ENCODE measurements at regions of chr11 and their contacts with region 1.

Region 1: DNA sequence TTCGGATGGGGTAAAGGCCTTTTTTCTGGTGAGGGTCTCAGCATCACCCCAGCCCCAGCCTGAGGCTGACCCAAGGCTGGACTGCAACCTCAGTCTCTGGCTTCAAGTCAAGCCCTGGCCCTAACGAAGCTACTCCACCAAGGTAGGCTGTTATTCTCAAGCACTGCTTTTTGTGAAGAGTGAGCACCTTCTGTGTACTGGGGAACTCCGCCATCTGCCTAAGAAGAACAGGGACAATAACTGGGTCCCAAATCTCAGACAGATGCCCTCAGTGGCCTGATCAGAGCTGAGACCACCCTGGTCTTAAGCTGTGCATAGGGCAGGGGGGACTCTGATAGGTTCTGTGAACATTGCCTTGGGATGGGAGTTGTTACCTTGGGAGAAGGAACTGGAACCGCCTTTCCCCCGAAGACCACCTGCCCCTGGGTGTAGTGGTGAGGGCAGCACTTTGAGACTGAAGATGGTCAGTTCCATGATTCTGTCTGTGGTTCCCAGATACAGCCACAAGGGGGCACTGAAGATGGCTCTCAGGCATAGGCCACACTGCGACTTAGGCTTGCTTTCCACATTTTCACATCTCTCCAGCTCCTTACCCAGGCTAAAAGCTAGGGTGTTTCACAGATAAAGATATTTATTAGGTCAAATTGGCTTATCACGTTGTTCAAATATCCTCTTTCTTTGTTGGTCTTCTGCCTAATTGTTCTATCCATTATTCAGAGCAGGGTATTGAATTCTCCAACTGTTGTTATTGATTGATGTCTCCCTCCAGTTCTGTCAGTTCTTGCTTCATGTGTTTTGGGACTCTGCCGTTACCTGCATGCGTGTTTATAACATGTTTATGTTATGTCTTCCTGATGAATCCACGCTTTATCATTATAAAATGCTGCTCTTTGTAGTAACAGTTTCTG is 11.8 kb upstream of the UVRAG start:
- DNase-seq: peak; percentile 81
- ATAC-seq: peak; percentile 93
- H3K4me3 Mint-ChIP-seq: no peak overlapping the region
- H3K27ac Mint-ChIP-seq: no peak overlapping the region
- H3K4me1 Mint-ChIP-seq: peaks cover 20% of the 10 kb centered on the region
- H3K27me3 Mint-ChIP-seq: peaks cover 4% of the 10 kb centered on the region

Region 2: DNA sequence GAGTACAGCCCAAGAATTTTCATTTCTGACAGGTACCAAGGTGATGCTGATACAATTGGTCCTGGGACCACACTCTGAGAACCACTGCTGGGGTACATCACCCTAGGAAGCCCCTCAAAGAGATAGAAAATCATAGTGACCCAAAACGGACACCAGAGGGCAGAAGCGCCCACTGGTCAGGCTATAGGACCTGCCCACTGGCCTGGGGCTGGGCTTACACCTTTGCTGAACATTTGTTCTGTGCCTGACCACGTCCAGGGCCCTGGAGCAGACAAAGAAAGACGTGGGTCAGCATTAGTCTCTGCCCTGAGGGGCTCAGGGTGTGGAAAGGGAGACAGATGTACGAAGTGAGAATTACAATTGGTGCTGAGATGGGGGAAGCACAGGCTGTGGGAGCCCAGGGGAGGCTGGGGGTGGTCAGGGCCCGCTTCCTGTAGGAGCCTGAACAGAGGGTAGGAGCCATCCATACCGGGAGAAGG is 255.5 kb before region 1 on chr11:
- CTCF ChIA-PET with region 1: no interaction called
- POLR2A ChIA-PET with region 1: no interaction called
- DNase-seq: peak; percentile 52
- ATAC-seq: peak; percentile 76
- H3K4me3 Mint-ChIP-seq: no peak overlapping the region
- H3K27ac Mint-ChIP-seq: no peak overlapping the region
- H3K4me1 Mint-ChIP-seq: peaks cover 5% of the 10 kb centered on the region
- H3K27me3 Mint-ChIP-seq: peaks cover 9% of the 10 kb centered on the region

Region 3: DNA sequence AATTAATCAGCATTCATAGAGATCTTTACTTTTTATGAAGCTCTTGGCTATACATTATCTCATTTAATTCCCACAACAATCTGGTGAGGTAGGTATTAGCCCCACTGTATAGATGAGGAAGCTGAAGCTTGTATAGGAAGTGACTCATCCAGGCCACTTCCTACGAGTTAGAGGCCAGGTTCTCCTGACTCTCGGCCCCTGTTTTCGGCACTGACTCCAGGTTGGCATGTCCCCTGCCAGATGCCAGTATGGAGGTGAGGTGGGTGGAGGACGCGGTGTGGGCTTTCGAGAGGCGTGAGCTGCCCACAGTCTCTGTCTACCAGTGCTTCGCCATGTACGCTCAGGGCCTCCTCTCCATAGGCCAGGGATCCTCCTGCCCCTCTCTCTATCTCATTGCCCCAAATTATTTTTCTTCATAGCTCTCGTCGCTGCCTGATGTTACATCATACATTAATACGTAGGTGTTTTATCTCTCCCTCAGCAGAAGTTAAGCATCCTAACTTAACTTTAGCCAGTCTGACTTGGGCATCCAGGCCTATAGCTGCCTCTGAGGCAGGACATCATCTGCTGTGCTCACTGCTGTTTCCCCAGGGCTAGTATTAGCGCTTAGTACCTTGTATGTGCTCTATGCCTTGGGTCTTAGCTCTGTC is 25.6 kb before region 1 on chr11:
- CTCF ChIA-PET with region 1: interaction called, 12 read pairs
- POLR2A ChIA-PET with region 1: interaction called, 3 read pairs
- DNase-seq: peak; percentile 31
- ATAC-seq: peak; percentile 59
- H3K4me3 Mint-ChIP-seq: no peak overlapping the region
- H3K27ac Mint-ChIP-seq: peak overlapping the region; percentile 48
- H3K4me1 Mint-ChIP-seq: peaks cover 36% of the 10 kb centered on the region
- H3K27me3 Mint-ChIP-seq: no peaks in the 10 kb centered on the region

Region 4: DNA sequence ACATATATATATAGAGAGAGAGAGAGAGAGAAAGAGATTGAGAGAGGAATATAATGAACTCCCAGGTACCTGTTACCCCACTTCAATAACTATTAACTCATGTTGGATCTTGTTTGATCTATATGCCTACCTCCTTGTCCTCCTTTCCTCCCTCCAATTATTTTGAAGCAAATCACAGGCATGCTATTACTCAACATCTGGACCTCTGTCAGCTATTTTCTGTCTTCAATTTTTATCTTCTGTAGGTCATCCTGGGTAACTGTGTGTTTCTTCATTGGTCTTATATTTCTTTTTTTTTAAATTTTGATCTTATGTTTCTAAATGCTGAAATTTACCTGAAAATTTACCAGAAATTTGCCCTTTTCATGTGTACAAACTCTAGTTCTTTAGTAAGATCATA is 36.7 kb after region 1 on chr11:
- CTCF ChIA-PET with region 1: interaction called, 10 read pairs
- POLR2A ChIA-PET with region 1: no interaction called
- DNase-seq: no peak
- ATAC-seq: no peak
- H3K4me3 Mint-ChIP-seq: no peak overlapping the region
- H3K27ac Mint-ChIP-seq: no peak overlapping the region
- H3K4me1 Mint-ChIP-seq: peaks cover 6% of the 10 kb centered on the region
- H3K27me3 Mint-ChIP-seq: no peaks in the 10 kb centered on the region

Region 5: DNA sequence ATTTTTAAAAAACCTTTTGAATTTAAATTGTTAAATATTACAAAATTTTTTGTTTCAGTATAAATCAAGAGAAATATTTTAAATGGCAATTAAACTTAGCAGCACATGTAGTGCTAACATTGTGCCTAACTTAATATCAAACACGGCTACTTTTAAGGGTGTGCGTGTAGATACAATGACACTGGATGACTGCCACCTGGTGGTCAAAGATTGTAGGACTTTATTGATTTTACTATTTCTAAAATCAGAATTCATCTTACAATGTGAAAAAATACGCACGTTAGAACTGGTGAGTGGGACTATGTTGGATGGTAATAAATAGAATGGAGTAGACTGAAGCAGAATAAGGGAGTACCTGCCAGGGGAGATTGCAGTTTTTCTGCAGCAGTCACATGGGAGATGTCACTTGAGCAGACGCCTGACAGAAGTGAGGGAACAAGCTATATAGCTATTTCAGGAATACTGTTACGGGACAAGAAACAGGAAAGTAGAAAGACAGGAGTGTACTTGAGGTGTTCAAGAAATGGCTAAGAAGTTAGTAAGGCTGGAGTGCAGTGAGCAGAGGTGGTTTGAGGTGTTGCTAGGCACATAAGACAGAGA is 64.7 kb after region 1 on chr11:
- CTCF ChIA-PET with region 1: interaction called, 97 read pairs
- POLR2A ChIA-PET with region 1: no interaction called
- DNase-seq: peak; percentile 65
- ATAC-seq: peak; percentile 51
- H3K4me3 Mint-ChIP-seq: no peak overlapping the region
- H3K27ac Mint-ChIP-seq: no peak overlapping the region
- H3K4me1 Mint-ChIP-seq: peaks cover 4% of the 10 kb centered on the region
- H3K27me3 Mint-ChIP-seq: no peaks in the 10 kb centered on the region

Region 6: GRCh38 chr11:76152086-76152681 is 349.0 kb after region 1 on chr11:
- CTCF ChIA-PET with region 1: interaction called, 27 read pairs
- POLR2A ChIA-PET with region 1: no interaction called
- DNase-seq: peak; percentile 88
- ATAC-seq: peak; percentile 95
- H3K4me3 Mint-ChIP-seq: peak overlapping the region; percentile 73
- H3K27ac Mint-ChIP-seq: peak overlapping the region; percentile 37
- H3K4me1 Mint-ChIP-seq: peaks cover 26% of the 10 kb centered on the region
- H3K27me3 Mint-ChIP-seq: peaks cover 7% of the 10 kb centered on the region

Measured in activated CD8-positive, alpha-beta T cell treated with anti-CD3 and anti-CD28 coated beads, Interleukin-2, amount 10 ng/mL, durations not matched to agents 7 days and 5 days (primary cell).